HCT116 (cell line): ENCODE measurements at regions of chr18 and their contacts with region 1.

Region 1: DNA sequence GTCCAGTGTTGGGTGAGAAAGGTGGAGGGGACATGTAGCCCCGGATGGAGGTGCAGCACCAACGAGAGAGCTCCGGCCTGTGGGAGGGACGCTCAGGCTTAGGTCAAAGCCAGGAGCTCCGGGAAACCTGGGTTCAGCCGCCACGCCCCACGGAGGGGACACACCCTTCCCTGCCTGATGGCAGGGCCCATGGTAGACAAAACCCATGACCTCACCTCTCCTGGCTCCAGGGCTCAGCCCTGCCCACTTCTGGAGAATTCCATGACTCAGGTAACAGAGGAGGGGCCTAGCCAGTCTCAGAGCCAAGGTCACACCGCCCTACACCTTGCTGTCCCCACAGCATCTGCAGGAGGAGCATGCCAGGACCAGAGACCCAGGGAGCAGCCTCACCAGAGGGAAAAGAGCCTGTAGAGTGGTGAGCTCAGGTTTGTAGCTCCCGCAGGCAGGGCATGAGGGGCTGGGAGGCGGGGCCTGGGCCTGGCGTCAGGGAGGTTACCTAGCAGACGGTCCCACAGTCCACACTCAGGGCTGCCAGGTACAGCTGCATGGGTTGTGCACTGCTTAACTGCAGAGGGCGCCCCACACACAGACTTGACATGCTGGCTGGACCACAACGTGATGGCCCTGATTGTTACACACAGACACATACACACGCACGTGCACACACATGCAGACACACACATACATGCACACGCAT is 70.8 kb upstream of the SMAD7 start:
- DNase-seq: peak; percentile 83
- ATAC-seq: peak; percentile 89
- H3K4me3 ChIP-seq: peak overlapping the region; percentile 33 to 51
- H3K27ac ChIP-seq: peak overlapping the region; percentile 55; the same call in 1 of the 2 replicates
- H3K4me1 ChIP-seq: peaks cover 31 to 42% of the 10 kb centered on the region in 2 experiments
- H3K27me3 ChIP-seq: no peaks in the 10 kb centered on the region
- CTCF ChIP-seq: peak in 2 of 3 experiments; percentile 79 to 82; a peak in 4 of 6 replicates
- POLR2A ChIP-seq: no peak
- RAD21 ChIP-seq: no peak

Region 2: GRCh38 chr18:48949606-48950470 is 71.7 kb before region 1 on chr18:
- CTCF ChIA-PET with region 1: no interaction called
- POLR2A ChIA-PET with region 1: no interaction called
- RAD21 ChIA-PET with region 1: interaction called in 1 of 2 experiments, 3 read pairs
- intact Hi-C with region 1: loop called (anchors 5 kb)
- DNase-seq: no peak
- ATAC-seq: peak; percentile 35
- H3K4me3 ChIP-seq: peak overlapping the region; percentile 37 to 65
- H3K27ac ChIP-seq: peak overlapping the region; percentile 54; the same call in 1 of the 2 replicates
- H3K4me1 ChIP-seq: peaks cover 55 to 79% of the 10 kb centered on the region in 2 experiments
- H3K27me3 ChIP-seq: peaks cover 22% of the 10 kb centered on the region; the same call in 1 of the 2 replicates
- CTCF ChIP-seq: 0 out of 6 replicates have a peak, but pooled peaks of 1 of the 3 experiments have one; percentile 1
- POLR2A ChIP-seq: no peak
- RAD21 ChIP-seq: no peak

Region 3: DNA sequence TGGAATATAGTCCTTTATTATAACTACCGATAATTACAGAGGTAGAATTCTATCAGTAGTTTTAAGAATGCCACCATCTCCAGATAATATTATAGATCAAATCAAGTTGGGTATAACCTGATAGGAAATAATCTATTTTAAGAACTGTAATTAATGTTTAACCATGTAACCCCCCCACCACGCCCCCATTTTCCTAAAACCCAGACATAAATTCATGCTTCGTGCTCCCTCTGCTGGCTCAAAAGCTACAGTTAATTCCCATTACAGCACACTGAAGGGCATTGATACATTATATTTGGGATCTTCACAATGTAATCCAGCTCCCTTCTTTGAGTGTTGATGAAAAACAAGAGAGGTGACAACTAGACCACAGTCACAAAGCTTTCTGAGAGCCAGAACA is 157.2 kb after region 1 on chr18:
- CTCF ChIA-PET with region 1: interaction called, 14 read pairs
- POLR2A ChIA-PET with region 1: no interaction called
- RAD21 ChIA-PET with region 1: interaction called in 1 of 2 experiments, 4 read pairs
- intact Hi-C with region 1: loop called (anchors 1 kb)
- DNase-seq: peak; percentile 19
- ATAC-seq: peak; percentile 73
- H3K4me3 ChIP-seq: no peak overlapping the region
- H3K27ac ChIP-seq: no peak overlapping the region
- H3K4me1 ChIP-seq: peaks cover 9% of the 10 kb centered on the region in 2 experiments; a peak in 2 of 4 replicates
- H3K27me3 ChIP-seq: no peaks in the 10 kb centered on the region
- CTCF ChIP-seq: peak; percentile 55 to 74 (median 69); a peak in 5 of 6 replicates
- POLR2A ChIP-seq: no peak
- RAD21 ChIP-seq: peak; percentile 73

Region 4: GRCh38 chr18:49238433-49239042 is 217.0 kb after region 1 on chr18:
- CTCF ChIA-PET with region 1: interaction called, 12 read pairs
- POLR2A ChIA-PET with region 1: no interaction called
- RAD21 ChIA-PET with region 1: interaction called, 3 read pairs
- intact Hi-C with region 1: loop called (anchors 5 kb)
- DNase-seq: peak; percentile 13
- ATAC-seq: peak; percentile 57; the same call in 1 of the 2 replicates
- H3K4me3 ChIP-seq: no peak overlapping the region
- H3K27ac ChIP-seq: no peak overlapping the region
- H3K4me1 ChIP-seq: no peaks in the 10 kb centered on the region
- H3K27me3 ChIP-seq: no peaks in the 10 kb centered on the region
- CTCF ChIP-seq: peak; percentile 57 to 63 (median 61)
- POLR2A ChIP-seq: no peak
- RAD21 ChIP-seq: peak; percentile 79

Region 5: GRCh38 chr18:49447810-49448745 is 426.5 kb after region 1 on chr18:
- CTCF ChIA-PET with region 1: no interaction called
- POLR2A ChIA-PET with region 1: no interaction called
- RAD21 ChIA-PET with region 1: no interaction called
- intact Hi-C with region 1: loop called (anchors 10 kb)
- DNase-seq: peak; percentile 67
- ATAC-seq: peak; percentile 97
- H3K4me3 ChIP-seq: no peak overlapping the region
- H3K27ac ChIP-seq: no peak overlapping the region
- H3K4me1 ChIP-seq: no peaks in the 10 kb centered on the region
- H3K27me3 ChIP-seq: no peaks in the 10 kb centered on the region
- CTCF ChIP-seq: peak; percentile 49 to 80 (median 64); a peak in 5 of 6 replicates
- POLR2A ChIP-seq: no peak
- RAD21 ChIP-seq: peak; percentile 66